Activated CD8-positive, alpha-beta memory T cell treated with anti-CD3 and anti-CD28 coated beads, Interleukin-2, amount 10 ng/mL, durations not matched to agents 7 days and 5 days (primary cell): ENCODE measurements at regions of chr1 and their contacts with region 1.

Region 1: GRCh38 chr1:28736450-28737306 is at the start of gene YTHDF2:
- DNase-seq: peak; percentile 98
- ATAC-seq: peak; percentile 96
- H3K4me3 Mint-ChIP-seq: peak within 1 kb of the TSS; percentile 99
- H3K27ac Mint-ChIP-seq: peak within 1 kb of the TSS; percentile 95
- H3K4me1 Mint-ChIP-seq: peaks cover 41% of the 10 kb centered on the region
- H3K27me3 Mint-ChIP-seq: no peaks in the 10 kb centered on the region
- total RNA-seq, gene YTHDF2: 65.0 to 81.8 TPM

Region 2: GRCh38 chr1:28581536-28582247 is 155.0 kb before region 1 on chr1:
- CTCF ChIA-PET with region 1: interaction called, 11 read pairs
- DNase-seq: peak; percentile 96
- ATAC-seq: peak; percentile 89
- H3K4me3 Mint-ChIP-seq: peak overlapping the region; percentile 85
- H3K27ac Mint-ChIP-seq: peak overlapping the region; percentile 89
- H3K4me1 Mint-ChIP-seq: peaks cover 29% of the 10 kb centered on the region
- H3K27me3 Mint-ChIP-seq: no peaks in the 10 kb centered on the region

Region 3: DNA sequence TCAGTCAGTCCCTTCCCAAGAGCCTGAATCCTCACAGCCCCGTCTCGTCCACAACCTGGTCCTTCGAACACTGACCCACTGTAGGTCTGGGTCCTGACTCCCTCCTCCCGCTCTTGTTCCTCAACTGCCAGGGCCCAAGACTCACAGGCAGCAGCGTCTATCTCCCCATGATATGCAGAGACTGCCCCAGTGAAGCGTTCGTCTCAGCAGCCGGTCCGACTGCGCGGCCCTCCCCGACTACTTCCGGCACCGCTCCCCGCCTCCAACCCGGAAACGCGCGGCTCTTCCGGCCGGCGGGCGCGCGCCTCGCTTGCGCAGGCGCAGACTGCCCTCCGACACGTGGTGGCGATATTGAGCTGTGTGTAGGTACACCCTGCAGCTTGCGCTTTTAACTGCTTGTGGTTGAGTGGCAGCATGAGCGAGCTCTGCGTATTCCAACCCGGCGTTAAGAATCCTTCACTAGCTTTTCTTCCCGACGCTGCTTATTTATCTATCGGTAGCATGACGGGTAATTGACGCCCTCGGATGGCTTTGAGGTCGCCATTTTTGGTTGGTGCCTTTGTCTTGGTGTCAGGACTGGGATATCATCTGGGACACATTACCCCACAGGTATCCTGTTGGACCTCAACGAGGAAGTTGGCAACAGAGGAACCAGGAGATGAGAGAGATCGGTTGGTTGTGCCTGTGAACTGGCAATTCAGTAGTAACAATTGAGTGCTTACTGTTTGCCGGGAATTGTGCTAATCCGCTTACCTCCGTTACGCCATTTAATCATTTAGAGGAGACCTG is 93.6 kb before region 1 on chr1 and contains the start of gene TAF12:
- CTCF ChIA-PET with region 1: interaction called, 31 read pairs
- DNase-seq: peak; percentile 95
- ATAC-seq: peak; percentile 89
- H3K4me3 Mint-ChIP-seq: peak within 1 kb of the TSS; percentile 97
- H3K27ac Mint-ChIP-seq: peak within 1 kb of the TSS; percentile 94
- H3K4me1 Mint-ChIP-seq: peaks cover 49% of the 10 kb centered on the region
- H3K27me3 Mint-ChIP-seq: no peaks in the 10 kb centered on the region
- total RNA-seq, gene TAF12: 30.4 to 33.0 TPM

Region 4: DNA sequence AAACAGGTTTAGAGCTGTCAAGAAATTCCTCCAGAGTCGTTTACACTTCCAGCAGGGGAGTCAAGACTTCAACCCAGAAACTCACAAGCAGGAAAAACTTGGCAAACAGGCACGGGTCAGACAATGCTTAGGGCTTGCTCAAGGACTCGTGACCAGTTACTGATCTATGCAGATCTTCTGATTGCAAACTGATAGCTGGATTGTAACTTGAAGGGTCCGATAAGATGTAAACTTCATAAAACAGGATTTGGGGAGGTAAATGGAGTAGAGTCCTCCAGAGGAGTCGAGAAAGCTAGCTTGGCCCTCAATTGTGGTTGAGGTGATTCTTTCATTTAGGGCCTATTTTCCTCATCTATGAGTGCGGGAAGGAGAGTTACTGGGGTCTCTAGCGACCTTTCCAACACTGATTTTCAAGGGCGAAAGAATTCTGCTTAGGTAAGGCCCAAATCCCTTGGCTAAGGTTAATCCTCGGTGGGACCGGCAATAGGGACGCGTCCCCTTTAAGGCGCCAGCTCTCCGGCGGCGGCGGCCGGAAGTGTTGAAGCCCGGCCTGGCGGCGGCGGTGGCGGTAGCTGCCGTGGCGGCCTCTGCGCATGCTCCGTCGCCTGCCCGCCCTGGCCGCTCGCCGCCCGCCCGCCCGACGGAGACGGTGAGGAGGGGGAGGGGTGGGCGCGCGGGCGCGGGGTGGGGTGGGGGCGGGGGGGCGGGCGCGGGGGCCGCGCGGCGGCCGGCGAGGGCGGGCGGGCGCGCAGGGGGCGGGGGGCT is 68.3 kb before region 1 on chr1 and contains the start of gene GMEB1:
- CTCF ChIA-PET with region 1: interaction called, 29 read pairs
- DNase-seq: peak; percentile 92
- ATAC-seq: peak; percentile 75
- H3K4me3 Mint-ChIP-seq: peak within 1 kb of the TSS; percentile 95
- H3K27ac Mint-ChIP-seq: peak within 1 kb of the TSS; percentile 99
- H3K4me1 Mint-ChIP-seq: peaks cover 14% of the 10 kb centered on the region
- H3K27me3 Mint-ChIP-seq: no peaks in the 10 kb centered on the region
- total RNA-seq, gene GMEB1: 33.0 to 38.2 TPM

Region 5: GRCh38 chr1:28718586-28719331 is 17.9 kb before region 1 on chr1:
- CTCF ChIA-PET with region 1: interaction called, 13 read pairs
- DNase-seq: no peak
- ATAC-seq: no peak
- H3K4me3 Mint-ChIP-seq: no peak overlapping the region
- H3K27ac Mint-ChIP-seq: no peak overlapping the region
- H3K4me1 Mint-ChIP-seq: no peaks in the 10 kb centered on the region
- H3K27me3 Mint-ChIP-seq: no peaks in the 10 kb centered on the region

Region 6: DNA sequence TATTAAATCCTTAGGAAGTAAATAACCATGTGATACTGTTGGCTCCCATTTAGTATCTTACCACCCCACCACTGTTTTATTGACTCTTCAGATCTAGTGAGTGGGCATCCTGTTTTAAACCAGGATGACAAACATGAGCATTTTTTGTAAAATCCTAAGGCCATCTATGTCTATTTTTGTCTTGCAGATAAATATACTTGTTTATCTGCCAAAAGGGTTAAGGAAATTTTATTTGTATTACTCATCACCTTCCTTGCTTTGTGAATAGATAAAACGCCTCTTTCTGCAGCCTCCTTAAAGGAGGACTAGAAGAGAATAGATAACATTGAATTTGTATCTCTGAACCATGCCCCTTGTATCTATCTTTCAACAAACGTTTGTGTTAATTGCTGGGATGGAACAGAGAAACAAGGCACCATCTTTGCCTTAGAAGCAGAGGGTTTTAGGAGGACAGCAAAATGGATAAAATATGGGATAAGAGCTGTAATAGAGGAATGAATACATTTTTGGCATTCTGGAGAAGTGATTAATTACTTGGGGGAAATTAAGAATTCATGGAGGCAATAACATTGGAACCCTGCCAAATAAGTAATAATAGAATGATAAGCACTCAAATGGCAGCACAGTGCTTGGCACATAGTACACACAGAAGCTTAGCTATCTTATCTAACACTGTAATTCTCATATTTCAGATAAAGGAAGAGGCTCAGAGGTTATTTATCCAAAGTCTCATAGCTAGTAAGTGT is 14.8 kb after region 1 on chr1:
- CTCF ChIA-PET with region 1: interaction called, 23 read pairs
- DNase-seq: no peak
- ATAC-seq: no peak
- H3K4me3 Mint-ChIP-seq: no peak overlapping the region
- H3K27ac Mint-ChIP-seq: no peak overlapping the region
- H3K4me1 Mint-ChIP-seq: peaks cover 47% of the 10 kb centered on the region
- H3K27me3 Mint-ChIP-seq: no peaks in the 10 kb centered on the region

Region 7: DNA sequence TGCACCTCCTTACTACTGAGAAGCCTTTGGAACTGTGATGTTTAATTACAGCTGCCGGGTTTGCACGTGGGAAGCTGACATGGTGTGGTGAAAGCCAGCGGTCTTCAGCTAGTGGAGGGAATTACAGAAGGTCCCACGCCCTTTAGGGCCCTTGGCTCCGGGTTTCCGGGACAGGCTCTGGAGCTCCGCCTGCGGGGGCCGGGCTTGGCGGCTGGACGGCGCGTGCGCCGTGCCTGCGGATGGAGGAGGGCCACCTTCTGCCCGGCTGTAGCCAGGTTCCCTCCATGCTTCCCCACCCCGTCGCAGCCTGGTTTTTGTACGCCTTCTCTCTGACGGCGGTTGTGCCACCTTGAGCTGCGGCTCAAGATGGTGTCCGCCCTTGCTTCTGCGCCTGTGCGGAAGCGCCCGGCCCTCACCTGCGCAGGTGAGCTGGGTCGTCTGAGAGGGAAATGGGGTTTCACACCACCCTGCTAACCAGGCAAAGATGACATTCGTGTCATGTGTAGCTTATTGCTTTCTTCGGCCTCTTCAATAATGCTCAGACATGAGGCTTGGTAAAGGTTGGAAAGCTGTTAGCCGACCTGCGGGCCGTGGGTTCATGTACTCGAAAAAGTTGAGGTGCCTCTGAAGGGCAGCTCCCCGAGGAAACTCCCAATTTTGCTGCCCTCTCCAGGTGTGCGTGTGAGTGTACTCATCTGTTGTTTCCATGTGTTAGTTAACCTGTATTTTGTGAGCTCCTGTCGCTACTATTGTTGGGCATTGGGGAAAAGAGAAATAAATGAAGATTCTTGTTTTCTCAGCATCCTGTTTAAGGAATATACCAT is 38.7 kb after region 1 on chr1:
- CTCF ChIA-PET with region 1: interaction called, 14 read pairs
- DNase-seq: peak; percentile 77
- ATAC-seq: peak; percentile 98
- H3K4me3 Mint-ChIP-seq: peak overlapping the region; percentile 71
- H3K27ac Mint-ChIP-seq: peak overlapping the region; percentile 72
- H3K4me1 Mint-ChIP-seq: peaks cover 9% of the 10 kb centered on the region
- H3K27me3 Mint-ChIP-seq: no peaks in the 10 kb centered on the region